Activated CD4-positive, alpha-beta T cell treated with anti-CD3 and anti-CD28 coated beads, Interleukin-2, amount 10 ng/mL, durations not matched to agents 24 days and 14 days (primary cell): ENCODE measurements at regions of chr13 and their contacts with region 1.

Region 1: GRCh38 chr13:75299913-75300862 is 181.8 kb downstream of the TBC1D4 start:
- DNase-seq: no peak
- H3K4me3 Mint-ChIP-seq: peak overlapping the region; percentile 43
- H3K27ac Mint-ChIP-seq: peak overlapping the region; percentile 72
- H3K4me1 Mint-ChIP-seq: peaks cover 20% of the 10 kb centered on the region
- H3K27me3 Mint-ChIP-seq: no peaks in the 10 kb centered on the region

Region 2: GRCh38 chr13:75334634-75335447 is 34.7 kb after region 1 on chr13:
- intact Hi-C with region 1: loop called (anchors 5 kb)
- DNase-seq: no peak
- H3K4me3 Mint-ChIP-seq: no peak overlapping the region
- H3K27ac Mint-ChIP-seq: no peak overlapping the region
- H3K4me1 Mint-ChIP-seq: peaks cover under 1% of the 10 kb centered on the region
- H3K27me3 Mint-ChIP-seq: peaks cover 1% of the 10 kb centered on the region